ENCODE measurements at regions of chr2 and their contacts with region 1.

Region 1: DNA sequence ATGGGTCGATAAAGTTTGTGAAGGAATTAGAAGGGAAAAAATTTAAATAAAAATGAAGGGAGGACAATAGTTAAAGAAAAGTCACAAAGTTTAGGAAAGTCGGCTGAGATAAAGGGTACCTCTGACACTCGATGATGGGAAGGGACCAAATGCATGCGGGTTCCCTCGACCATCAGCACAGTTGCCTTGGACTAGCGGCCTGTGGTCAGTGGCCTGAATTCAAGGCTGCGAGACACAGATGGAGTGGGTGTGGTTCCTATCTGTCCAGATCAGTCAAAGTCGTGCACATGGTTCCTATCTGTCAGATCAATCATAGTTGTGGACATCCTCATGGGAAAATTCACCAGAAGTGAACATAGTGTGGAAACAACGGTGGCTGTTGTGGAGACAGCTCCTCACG is 161.8 kb downstream of the TPO start:
- DNase-seq: peak in 1 of 2 donors; percentile 24
- H3K4me3 ChIP-seq: no peak overlapping the region
- H3K27ac ChIP-seq: no peak overlapping the region
- H3K4me1 ChIP-seq: no peaks in the 10 kb centered on the region
- H3K27me3 ChIP-seq: peaks cover 0 to 4% of the 10 kb centered on the region in 2 donors
- CTCF ChIP-seq: no peak
- POLR2A ChIP-seq: no peak

Region 2: GRCh38 chr2:1518867-1519530 is 56.1 kb before region 1 on chr2:
- intact Hi-C with region 1: no loop called
- DNase-seq: no peak
- H3K4me3 ChIP-seq: no peak overlapping the region
- H3K27ac ChIP-seq: no peak overlapping the region
- H3K4me1 ChIP-seq: no peaks in the 10 kb centered on the region
- H3K27me3 ChIP-seq: no peaks in the 10 kb centered on the region
- CTCF ChIP-seq: no peak
- POLR2A ChIP-seq: no peak

Region 3: GRCh38 chr2:1609485-1610095 is 34.5 kb after region 1 on chr2:
- intact Hi-C with region 1: loop called (anchors 2 kb)
- DNase-seq: no peak
- H3K4me3 ChIP-seq: no peak overlapping the region
- H3K27ac ChIP-seq: no peak overlapping the region
- H3K4me1 ChIP-seq: no peaks in the 10 kb centered on the region
- H3K27me3 ChIP-seq: no peaks in the 10 kb centered on the region
- CTCF ChIP-seq: no peak
- POLR2A ChIP-seq: no peak

Region 4: GRCh38 chr2:2516386-2516785 is 941.3 kb after region 1 on chr2:
- intact Hi-C with region 1: no loop called
- DNase-seq: no peak
- H3K4me3 ChIP-seq: no peak overlapping the region
- H3K27ac ChIP-seq: no peak overlapping the region
- H3K4me1 ChIP-seq: no peaks in the 10 kb centered on the region
- H3K27me3 ChIP-seq: peaks cover 0 to 10% of the 10 kb centered on the region in 2 donors
- CTCF ChIP-seq: no peak
- POLR2A ChIP-seq: no peak